ENCODE measurements at regions of chr3 and their contacts with region 1.

Region 1: GRCh38 chr3:41893977-41894376 is 67.9 kb downstream of the ULK4 start:
- DNase-seq: no peak
- H3K4me3 ChIP-seq: no peak overlapping the region
- H3K27ac ChIP-seq: no peak overlapping the region
- H3K4me1 ChIP-seq: no peaks in the 10 kb centered on the region
- H3K27me3 ChIP-seq: no peaks in the 10 kb centered on the region
- CTCF ChIP-seq: peak; percentile 45 to 52 (median 51)
- EP300 ChIP-seq: no peak
- POLR2A ChIP-seq: no peak

Region 2: GRCh38 chr3:41955192-41955591 is 61.2 kb after region 1 on chr3:
- intact Hi-C with region 1: loop called (anchors 10 kb)
- DNase-seq: no peak
- H3K4me3 ChIP-seq: no peak overlapping the region
- H3K27ac ChIP-seq: no peak overlapping the region
- H3K4me1 ChIP-seq: peaks cover 0 to 3% (median under 1%) of the 10 kb centered on the region in 4 donors
- H3K27me3 ChIP-seq: no peaks in the 10 kb centered on the region
- CTCF ChIP-seq: no peak
- EP300 ChIP-seq: no peak
- POLR2A ChIP-seq: no peak

Region 3: GRCh38 chr3:41997702-41998550 is 103.9 kb after region 1 on chr3:
- intact Hi-C with region 1: loop called (anchors 10 kb)
- DNase-seq: no peak
- H3K4me3 ChIP-seq: no peak overlapping the region
- H3K27ac ChIP-seq: peak overlapping the region in 1 of 4 donors; percentile 32
- H3K4me1 ChIP-seq: peaks cover 10 to 14% (median 12%) of the 10 kb centered on the region in 4 donors
- H3K27me3 ChIP-seq: no peaks in the 10 kb centered on the region
- CTCF ChIP-seq: peak; percentile 38 to 48 (median 39)
- EP300 ChIP-seq: no peak
- POLR2A ChIP-seq: no peak

Region 4: DNA sequence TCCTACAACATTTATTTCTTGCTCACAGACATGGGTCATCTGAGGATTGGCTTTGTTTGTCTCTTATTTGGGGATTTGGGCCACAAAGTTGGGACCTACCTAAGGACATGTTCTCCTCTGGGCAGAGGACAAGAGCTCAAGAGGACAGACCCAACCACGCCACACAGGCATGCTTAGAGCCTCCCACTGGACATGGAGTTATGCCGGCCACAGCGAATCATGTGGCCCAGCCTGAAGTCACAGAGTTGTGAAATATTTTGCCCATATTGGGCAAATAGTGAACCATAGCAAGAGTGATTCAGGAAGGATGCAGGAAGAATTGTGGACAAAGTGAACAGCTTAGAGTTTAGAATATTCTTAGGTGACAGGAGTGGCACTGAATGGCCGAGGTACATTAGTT is 207.1 kb after region 1 on chr3:
- intact Hi-C with region 1: loop called (anchors 2 kb)
- DNase-seq: no peak
- H3K4me3 ChIP-seq: no peak overlapping the region
- H3K27ac ChIP-seq: peak overlapping the region; percentile 43 to 74 (median 58)
- H3K4me1 ChIP-seq: peaks cover 65 to 74% (median 70%) of the 10 kb centered on the region in 4 donors
- H3K27me3 ChIP-seq: no peaks in the 10 kb centered on the region
- CTCF ChIP-seq: no peak
- EP300 ChIP-seq: no peak
- POLR2A ChIP-seq: no peak

Region 5: DNA sequence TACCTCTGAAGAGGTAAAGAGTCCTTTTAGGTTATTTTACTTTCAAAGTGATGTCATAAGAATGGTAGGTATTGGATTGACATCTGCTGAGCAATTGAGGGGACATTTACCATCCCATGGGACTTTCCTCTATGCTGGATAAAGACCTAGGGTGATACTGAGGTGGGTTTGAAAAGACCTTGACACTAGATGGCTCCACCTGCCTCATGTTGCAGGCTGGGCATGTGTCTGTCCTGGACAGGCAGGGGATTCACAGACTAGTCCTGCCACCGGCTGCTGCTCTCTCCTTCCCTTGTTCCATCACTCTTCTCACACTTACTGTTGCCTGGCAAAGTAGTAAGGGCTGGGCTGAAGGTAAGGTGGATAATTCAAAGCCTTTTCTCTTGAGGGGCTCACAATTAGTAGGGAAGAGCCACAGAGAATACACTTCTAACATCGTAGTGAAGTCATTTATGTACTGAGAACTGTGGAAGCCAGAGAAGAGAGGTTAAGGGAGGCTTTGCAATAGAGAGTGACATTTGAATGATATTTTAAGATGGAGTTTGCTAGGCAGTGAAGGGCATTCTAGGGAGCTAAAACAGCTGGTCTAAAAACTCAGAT is 224.9 kb after region 1 on chr3:
- intact Hi-C with region 1: loop called (anchors 5 kb)
- DNase-seq: no peak
- H3K4me3 ChIP-seq: no peak overlapping the region
- H3K27ac ChIP-seq: peak overlapping the region in 3 of 4 donors; percentile 22 to 31 (median 28)
- H3K4me1 ChIP-seq: peaks cover 81 to 90% (median 82%) of the 10 kb centered on the region in 4 donors
- H3K27me3 ChIP-seq: no peaks in the 10 kb centered on the region
- CTCF ChIP-seq: no peak
- EP300 ChIP-seq: no peak
- POLR2A ChIP-seq: no peak

Region 6: GRCh38 chr3:42190701-42191462 is 296.9 kb after region 1 on chr3:
- intact Hi-C with region 1: loop called (anchors 5 kb)
- DNase-seq: no peak
- H3K4me3 ChIP-seq: no peak overlapping the region
- H3K27ac ChIP-seq: peak overlapping the region in 3 of 4 donors; percentile 10 to 36 (median 25)
- H3K4me1 ChIP-seq: peaks cover 27 to 50% (median 34%) of the 10 kb centered on the region in 4 donors
- H3K27me3 ChIP-seq: no peaks in the 10 kb centered on the region
- CTCF ChIP-seq: peak; percentile 69 to 87 (median 87)
- EP300 ChIP-seq: no peak
- POLR2A ChIP-seq: no peak

Region 7: DNA sequence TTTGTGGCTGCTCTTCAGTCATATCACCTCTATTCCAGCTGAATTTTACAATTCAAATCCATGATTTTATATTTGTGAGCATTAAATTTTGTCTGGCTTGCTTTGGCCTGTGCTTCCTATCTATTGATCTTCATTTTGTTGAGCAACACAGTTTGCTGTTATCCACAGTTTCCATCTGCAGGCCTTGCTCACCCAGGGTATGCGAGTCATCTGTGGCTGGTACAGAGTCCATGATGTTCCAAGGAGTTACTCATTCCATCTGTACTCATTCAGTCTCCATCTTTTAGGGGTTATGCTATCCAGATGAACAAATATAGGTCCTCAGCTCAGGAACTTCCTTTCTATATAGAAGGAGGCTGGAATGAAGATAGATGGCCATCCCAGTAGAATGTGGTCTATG is 442.1 kb after region 1 on chr3:
- intact Hi-C with region 1: no loop called
- DNase-seq: no peak
- H3K4me3 ChIP-seq: no peak overlapping the region
- H3K27ac ChIP-seq: no peak overlapping the region
- H3K4me1 ChIP-seq: no peaks in the 10 kb centered on the region
- H3K27me3 ChIP-seq: no peaks in the 10 kb centered on the region
- CTCF ChIP-seq: no peak
- EP300 ChIP-seq: no peak
- POLR2A ChIP-seq: no peak

Region 8: GRCh38 chr3:42443819-42444436 is 550.0 kb after region 1 on chr3:
- intact Hi-C with region 1: loop called (anchors 5 kb)
- DNase-seq: peak; percentile 95
- H3K4me3 ChIP-seq: no peak overlapping the region
- H3K27ac ChIP-seq: no peak overlapping the region
- H3K4me1 ChIP-seq: no peaks in the 10 kb centered on the region
- H3K27me3 ChIP-seq: peaks cover 0 to 15% (median 0%) of the 10 kb centered on the region in 4 donors
- CTCF ChIP-seq: peak in 2 of 3 experiments; percentile 95 to 96
- EP300 ChIP-seq: no peak
- POLR2A ChIP-seq: no peak